H1 (cell line): ENCODE measurements at regions of chr16 and their contacts with region 1.

Region 1: GRCh38 chr16:68085259-68086071 is at the start of gene NFATC3:
- DNase-seq: peak; percentile 85 to 97
- H3K4me3 ChIP-seq: peak within 1 kb of the TSS; percentile 91 to 99 (median 96)
- H3K27ac ChIP-seq: peak within 1 kb of the TSS; percentile 89
- H3K4me1 ChIP-seq: peaks cover 0 to 11% (median 6%) of the 10 kb centered on the region in 4 experiments; a peak in 5 of 7 replicates
- H3K27me3 ChIP-seq: no peaks in the 10 kb centered on the region
- CTCF ChIP-seq: no peak
- EP300 ChIP-seq: no peak
- POLR2A ChIP-seq: peak in 1 of 2 experiments; percentile 44; a peak in 1 of 3 replicates
- RAD21 ChIP-seq: no peak
- total RNA-seq, gene NFATC3: 30.2 and 34.5 TPM in 2 replicates

Region 2: DNA sequence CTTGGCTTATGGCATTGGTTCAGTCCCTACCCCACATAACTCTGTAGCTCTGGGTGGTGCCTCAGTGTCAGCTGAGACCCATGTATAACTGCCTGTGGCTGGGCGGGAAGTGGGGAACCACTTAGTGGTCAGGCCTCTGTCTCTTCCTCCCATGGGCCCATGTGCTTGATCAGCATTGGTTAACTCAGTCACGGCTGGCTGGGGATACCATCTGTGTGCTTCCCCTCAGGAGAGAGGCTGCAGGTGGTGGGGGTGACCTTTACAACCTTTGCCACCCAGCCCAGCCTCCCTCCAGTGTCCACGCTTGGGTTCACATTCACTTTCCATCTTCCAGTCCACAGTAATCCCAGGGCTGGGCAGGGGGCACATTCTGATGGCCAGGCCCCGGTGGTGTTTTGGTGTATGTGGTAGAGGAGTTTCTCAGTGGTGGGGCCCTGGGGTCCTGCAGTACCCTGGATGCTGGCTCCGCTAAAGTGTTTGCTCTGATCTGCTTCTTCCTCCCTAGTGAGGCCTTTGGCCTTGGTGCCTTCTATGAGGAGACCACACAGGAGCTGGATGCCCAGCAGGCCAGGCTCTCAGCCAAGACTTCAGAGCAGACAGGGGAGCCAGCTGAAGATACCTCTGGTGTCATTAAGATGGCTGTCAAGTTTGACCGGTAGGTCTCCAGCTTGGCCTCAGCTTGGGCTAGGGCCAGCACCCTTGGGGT is 10.5 kb before region 1 on chr16:
- CTCF ChIA-PET with region 1: interaction called, 19 read pairs
- POLR2A ChIA-PET with region 1: interaction called, 27 read pairs
- DNase-seq: peak in 1 of 2 experiments; percentile 28
- H3K4me3 ChIP-seq: no peak overlapping the region
- H3K27ac ChIP-seq: no peak overlapping the region
- H3K4me1 ChIP-seq: no peaks in the 10 kb centered on the region; a peak in 1 of 7 replicates
- H3K27me3 ChIP-seq: no peaks in the 10 kb centered on the region
- CTCF ChIP-seq: no peak
- EP300 ChIP-seq: no peak
- POLR2A ChIP-seq: no peak
- RAD21 ChIP-seq: no peak

Region 3: GRCh38 chr16:68229431-68230198 is 144.2 kb after region 1 on chr16:
- CTCF ChIA-PET with region 1: interaction called, 10 read pairs
- POLR2A ChIA-PET with region 1: interaction called, 61 read pairs
- DNase-seq: peak in 1 of 2 experiments; percentile 77
- H3K4me3 ChIP-seq: no peak overlapping the region
- H3K27ac ChIP-seq: no peak overlapping the region
- H3K4me1 ChIP-seq: peaks cover 0 to 15% (median 10%) of the 10 kb centered on the region in 4 experiments; a peak in 5 of 7 replicates
- H3K27me3 ChIP-seq: no peaks in the 10 kb centered on the region
- CTCF ChIP-seq: peak; percentile 2 to 87 (median 84)
- EP300 ChIP-seq: no peak
- POLR2A ChIP-seq: no peak
- RAD21 ChIP-seq: peak; percentile 89 to 93

Region 4: DNA sequence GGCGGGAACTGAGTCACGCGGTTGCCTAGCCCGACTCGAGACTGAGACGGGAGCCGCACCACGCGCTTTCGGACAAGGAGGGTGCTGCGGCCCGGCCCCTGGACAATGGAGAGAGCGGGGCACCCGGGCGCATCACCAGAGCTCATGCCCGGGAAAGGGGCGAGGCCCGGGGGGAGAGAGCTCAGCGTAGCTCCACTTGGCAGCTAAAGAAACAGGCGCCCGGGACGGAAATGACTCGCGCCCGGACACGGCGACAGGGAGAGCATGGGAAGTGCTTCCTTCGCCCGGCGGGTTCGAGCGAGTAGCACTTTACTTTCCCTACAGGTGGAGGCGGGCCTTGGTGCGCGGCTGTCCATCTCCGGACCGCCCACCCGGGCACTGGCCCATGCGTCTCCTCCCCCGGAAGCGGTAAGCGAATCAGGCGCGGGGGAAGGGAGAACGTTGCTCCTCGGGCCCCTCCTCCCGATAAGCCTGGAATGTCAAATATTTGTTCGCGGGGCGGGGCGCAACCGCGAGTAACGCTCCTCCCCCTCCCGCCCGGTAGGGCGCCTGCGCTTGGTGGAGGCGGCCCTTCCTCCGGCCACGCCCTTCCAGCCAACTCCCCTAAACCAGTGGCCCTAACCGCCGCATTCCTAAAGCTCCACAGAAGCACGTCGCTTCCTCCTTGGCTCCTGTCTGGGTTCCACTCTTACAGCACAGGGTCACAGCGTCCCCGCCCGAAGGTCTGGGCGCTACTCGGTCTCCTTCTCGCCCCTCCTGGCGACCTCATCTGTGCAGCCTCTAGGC is 152.0 kb after region 1 on chr16:
- CTCF ChIA-PET with region 1: interaction called, 4 read pairs
- POLR2A ChIA-PET with region 1: interaction called, 61 read pairs
- DNase-seq: peak; percentile 97 to 99
- H3K4me3 ChIP-seq: peak overlapping the region; percentile 59 to 85 (median 82)
- H3K27ac ChIP-seq: peak overlapping the region; percentile 84
- H3K4me1 ChIP-seq: peaks cover 0 to 28% (median 20%) of the 10 kb centered on the region in 4 experiments; a peak in 5 of 7 replicates
- H3K27me3 ChIP-seq: no peaks in the 10 kb centered on the region
- CTCF ChIP-seq: no peak
- EP300 ChIP-seq: peak in 1 of 2 experiments; percentile 24; a peak in 1 of 3 replicates
- POLR2A ChIP-seq: peak; percentile 71 to 97
- RAD21 ChIP-seq: no peak

Region 5: GRCh38 chr16:68257906-68258800 is 172.7 kb after region 1 on chr16:
- CTCF ChIA-PET with region 1: no interaction called
- POLR2A ChIA-PET with region 1: no interaction called
- DNase-seq: no peak
- H3K4me3 ChIP-seq: no peak overlapping the region
- H3K27ac ChIP-seq: no peak overlapping the region
- H3K4me1 ChIP-seq: no peaks in the 10 kb centered on the region; a peak in 1 of 7 replicates
- H3K27me3 ChIP-seq: peaks cover 0 to 2% (median 0%) of the 10 kb centered on the region in 4 experiments; a peak in 2 of 7 replicates
- CTCF ChIP-seq: no peak
- EP300 ChIP-seq: no peak
- POLR2A ChIP-seq: no peak
- RAD21 ChIP-seq: no peak